Heart left ventricle (tissue), 16 donors: ENCODE measurements at regions of chr4 and their contacts with region 1.

Region 1: GRCh38 chr4:100076743-100077142 is 113.5 kb downstream of the DDIT4L start:
- DNase-seq: no peak
- ATAC-seq: no peak
- H3K4me3 ChIP-seq: no peak overlapping the region
- H3K27ac ChIP-seq: no peak overlapping the region
- H3K4me1 ChIP-seq: no peaks in the 10 kb centered on the region
- H3K27me3 ChIP-seq: peaks cover 0 to 6% (median 0%) of the 10 kb centered on the region in 9 donors
- CTCF ChIP-seq: no peak
- POLR2A ChIP-seq: no peak

Region 2: GRCh38 chr4:100609810-100610209 is 533.1 kb after region 1 on chr4:
- intact Hi-C with region 1: loop called in 1 of 10 experiments (anchors 10 kb)
- DNase-seq: no peak
- ATAC-seq: no peak
- H3K4me3 ChIP-seq: no peak overlapping the region
- H3K27ac ChIP-seq: no peak overlapping the region
- H3K4me1 ChIP-seq: no peaks in the 10 kb centered on the region
- H3K27me3 ChIP-seq: no peaks in the 10 kb centered on the region
- CTCF ChIP-seq: no peak
- POLR2A ChIP-seq: no peak